HEK293T (cell line): ENCODE measurements at regions of chr15 and their contacts with region 1.

Region 1: DNA sequence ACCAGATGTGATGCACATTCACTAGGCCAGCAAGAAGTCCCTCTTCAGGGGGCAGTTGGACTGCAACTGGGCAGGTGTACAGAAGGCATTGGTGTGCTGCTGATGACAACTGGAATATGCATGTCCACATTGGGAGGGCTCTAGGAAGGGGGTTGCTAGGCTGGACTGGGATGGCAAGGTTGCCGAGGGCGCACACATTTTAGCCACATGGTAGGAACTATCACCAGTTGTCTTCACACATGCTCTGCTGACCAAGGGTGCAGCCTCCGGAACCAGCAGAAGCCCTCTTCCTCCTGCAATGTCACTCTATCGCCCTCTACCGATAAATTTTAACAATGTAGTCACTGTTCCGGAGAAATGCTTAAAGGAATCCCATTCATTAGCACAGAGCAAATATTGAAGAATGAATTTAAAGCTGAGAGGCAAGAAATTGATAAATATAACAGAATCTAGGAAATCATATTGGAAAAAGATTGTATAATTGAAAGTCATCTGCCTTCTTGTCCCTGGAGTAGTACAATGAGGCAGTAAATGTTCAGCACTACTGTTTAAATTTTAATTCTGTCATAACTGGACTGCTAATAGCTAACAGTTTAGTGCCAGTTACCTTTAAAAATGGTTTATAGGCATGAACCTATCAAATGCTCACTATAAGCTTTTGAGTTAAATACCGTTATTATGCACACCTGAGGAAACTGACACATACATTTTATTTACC is 22.6 kb upstream of the LYSMD4 start:
- DNase-seq: peak; percentile 76

Region 2: DNA sequence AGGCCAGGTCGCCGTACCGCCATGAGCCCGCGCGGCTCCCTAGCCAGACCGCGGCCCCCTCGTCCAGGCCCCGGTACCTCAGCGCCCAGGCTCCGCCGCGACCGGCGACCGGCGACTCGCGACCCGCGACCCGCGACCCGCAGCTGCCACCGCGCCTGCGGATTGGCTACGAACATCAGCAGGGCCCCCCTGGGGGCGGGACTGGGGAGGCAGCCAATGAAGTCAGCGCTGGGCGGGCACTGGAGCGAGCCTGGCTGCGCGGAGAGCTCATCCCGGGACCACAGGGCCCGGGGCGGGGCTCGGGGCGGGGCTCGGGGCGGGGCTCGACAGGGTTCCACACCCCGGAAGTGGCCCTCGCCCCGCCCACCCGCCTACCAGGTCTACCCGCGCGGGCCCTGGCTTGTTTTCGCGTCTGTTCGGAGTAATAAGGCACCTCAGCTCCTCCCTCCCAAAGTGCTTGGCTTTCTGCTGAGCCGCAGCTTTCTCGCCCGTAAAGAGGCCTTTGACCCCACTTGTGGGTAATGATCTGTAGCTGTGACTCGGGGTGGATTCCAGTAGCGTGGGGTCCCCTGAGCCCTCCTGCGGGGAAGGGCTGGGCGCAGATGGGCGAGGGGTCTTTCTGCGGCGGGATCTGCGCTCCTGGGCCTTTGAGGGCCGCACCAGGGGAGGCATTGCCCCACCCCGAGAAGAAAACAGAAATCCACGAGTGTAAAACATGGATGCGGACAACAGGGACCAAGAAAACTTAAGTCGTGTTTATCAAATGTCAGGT is 22.4 kb before region 1 on chr15 and contains the start of gene LYSMD4:
- CTCF ChIA-PET with region 1: interaction called, 12 read pairs
- POLR2A ChIA-PET with region 1: interaction called, 17 read pairs
- DNase-seq: peak; percentile 100

Region 3: DNA sequence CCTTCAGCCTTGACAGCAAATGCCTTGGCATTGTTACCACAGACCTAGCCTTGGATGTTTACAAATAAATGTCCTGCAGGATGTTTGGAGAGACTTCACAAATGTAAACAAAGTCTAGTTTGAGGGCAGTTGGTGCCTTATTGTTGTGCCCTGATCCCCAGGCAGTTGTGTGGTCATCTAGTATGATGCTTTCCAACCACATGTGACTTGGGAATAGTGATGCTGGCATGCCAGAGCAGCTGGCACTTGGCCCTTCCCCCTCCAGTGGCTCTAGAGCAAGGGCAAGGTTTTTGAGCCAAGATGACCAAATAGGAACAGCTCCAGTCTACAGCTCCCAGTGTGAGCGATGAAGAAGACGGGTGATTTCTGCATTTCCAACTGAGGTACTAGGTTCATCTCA is 327.7 kb after region 1 on chr15:
- CTCF ChIA-PET with region 1: no interaction called
- POLR2A ChIA-PET with region 1: no interaction called
- DNase-seq: no peak